Natural killer cell (primary cell): ENCODE measurements at regions of chr17 and their contacts with region 1.

Region 1: GRCh38 chr17:36148559-36149295 is 27.7 kb downstream of the TBC1D3B start:
- DNase-seq: peak; percentile 76 to 83
- ATAC-seq: peak; percentile 92 to 98 (median 94)
- H3K4me3 ChIP-seq: peak overlapping the region; percentile 37
- H3K4me3 Mint-ChIP-seq: peak overlapping the region; percentile 92
- H3K27ac ChIP-seq: peak overlapping the region; percentile 45
- H3K27ac Mint-ChIP-seq: peak overlapping the region; percentile 78 to 88
- H3K4me1 ChIP-seq: peaks cover 33% of the 10 kb centered on the region
- H3K4me1 Mint-ChIP-seq: peaks cover 64 to 69% of the 10 kb centered on the region in 2 donors
- H3K27me3 ChIP-seq: no peaks in the 10 kb centered on the region
- H3K27me3 Mint-ChIP-seq: peaks cover 0 to 3% of the 10 kb centered on the region in 2 donors
- CTCF ChIP-seq: peak; percentile 100

Region 2: DNA sequence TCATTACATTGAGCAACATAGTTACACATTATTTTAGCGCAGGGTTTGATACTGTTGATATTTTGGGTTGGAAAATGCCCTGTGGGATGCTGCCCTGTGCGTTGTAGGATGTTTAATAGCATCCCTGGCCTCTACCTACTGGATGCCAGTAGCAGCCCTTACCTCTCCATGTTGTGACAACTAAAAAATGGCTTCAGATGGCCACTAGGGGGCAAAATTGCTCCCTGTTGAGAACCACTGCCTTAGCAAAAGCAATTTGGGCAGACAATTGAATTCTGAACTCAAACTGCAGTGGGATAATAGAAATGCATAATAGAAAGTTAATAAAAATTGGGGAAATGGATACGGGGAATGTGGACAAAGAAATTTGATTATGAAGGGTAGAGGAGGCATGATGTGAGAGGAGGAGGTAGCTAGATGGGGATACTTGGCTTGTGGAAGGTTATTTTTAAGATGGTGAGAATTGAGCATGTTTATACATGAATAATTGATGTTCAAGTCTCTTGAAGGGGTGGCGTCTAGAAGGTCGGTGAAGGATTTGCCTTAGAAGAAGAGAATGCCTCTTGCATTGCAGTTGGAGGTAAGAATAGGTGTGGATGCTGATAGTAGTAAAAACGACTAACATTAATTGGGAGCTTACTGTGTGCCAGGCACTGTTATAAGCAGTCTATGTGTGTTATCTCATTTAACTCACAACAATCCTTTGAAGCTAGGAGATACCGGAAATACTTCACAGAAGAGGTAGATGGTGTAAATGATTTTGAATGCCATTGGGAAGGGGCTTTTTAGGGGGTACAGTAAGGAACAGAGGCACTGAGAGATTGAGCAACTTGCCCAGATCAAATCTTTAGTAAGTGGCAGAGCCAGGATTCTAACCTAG is 299.0 kb before region 1 on chr17:
- intact Hi-C with region 1: loop called (anchors 1 kb)
- DNase-seq: peak; percentile 44 to 86
- ATAC-seq: peak; percentile 81 to 96 (median 92)
- H3K4me3 ChIP-seq: no peak overlapping the region
- H3K4me3 Mint-ChIP-seq: peak overlapping the region; percentile 62
- H3K27ac ChIP-seq: peak overlapping the region; percentile 27
- H3K27ac Mint-ChIP-seq: peak overlapping the region; percentile 59 to 68
- H3K4me1 ChIP-seq: peaks cover 18% of the 10 kb centered on the region
- H3K4me1 Mint-ChIP-seq: peaks cover 27 to 41% of the 10 kb centered on the region in 2 donors
- H3K27me3 ChIP-seq: no peaks in the 10 kb centered on the region
- H3K27me3 Mint-ChIP-seq: no peaks in the 10 kb centered on the region
- CTCF ChIP-seq: peak; percentile 92

Region 3: GRCh38 chr17:35969558-35970380 is 179.0 kb before region 1 on chr17:
- intact Hi-C with region 1: loop called (anchors 1 kb)
- DNase-seq: peak; percentile 73 to 85
- ATAC-seq: peak; percentile 78 to 93 (median 88)
- H3K4me3 ChIP-seq: no peak overlapping the region
- H3K4me3 Mint-ChIP-seq: peak overlapping the region; percentile 28
- H3K27ac ChIP-seq: no peak overlapping the region
- H3K27ac Mint-ChIP-seq: peak overlapping the region in 1 of 2 donors; percentile 78
- H3K4me1 ChIP-seq: peaks cover 8% of the 10 kb centered on the region
- H3K4me1 Mint-ChIP-seq: peaks cover 10 to 22% of the 10 kb centered on the region in 2 donors
- H3K27me3 ChIP-seq: no peaks in the 10 kb centered on the region
- H3K27me3 Mint-ChIP-seq: no peaks in the 10 kb centered on the region
- CTCF ChIP-seq: peak; percentile 81

Region 4: GRCh38 chr17:35981908-35982330 is 166.8 kb before region 1 on chr17:
- intact Hi-C with region 1: no loop called
- DNase-seq: peak in 1 of 2 donors; percentile 30
- ATAC-seq: peak in 2 of 3 donors; percentile 38 to 62
- H3K4me3 ChIP-seq: no peak overlapping the region
- H3K4me3 Mint-ChIP-seq: no peak overlapping the region
- H3K27ac ChIP-seq: no peak overlapping the region
- H3K27ac Mint-ChIP-seq: peak overlapping the region in 1 of 2 donors; percentile 47
- H3K4me1 ChIP-seq: peaks cover 11% of the 10 kb centered on the region
- H3K4me1 Mint-ChIP-seq: peaks cover 25 to 61% of the 10 kb centered on the region in 2 donors
- H3K27me3 ChIP-seq: no peaks in the 10 kb centered on the region
- H3K27me3 Mint-ChIP-seq: no peaks in the 10 kb centered on the region
- CTCF ChIP-seq: peak; percentile 13

Region 5: DNA sequence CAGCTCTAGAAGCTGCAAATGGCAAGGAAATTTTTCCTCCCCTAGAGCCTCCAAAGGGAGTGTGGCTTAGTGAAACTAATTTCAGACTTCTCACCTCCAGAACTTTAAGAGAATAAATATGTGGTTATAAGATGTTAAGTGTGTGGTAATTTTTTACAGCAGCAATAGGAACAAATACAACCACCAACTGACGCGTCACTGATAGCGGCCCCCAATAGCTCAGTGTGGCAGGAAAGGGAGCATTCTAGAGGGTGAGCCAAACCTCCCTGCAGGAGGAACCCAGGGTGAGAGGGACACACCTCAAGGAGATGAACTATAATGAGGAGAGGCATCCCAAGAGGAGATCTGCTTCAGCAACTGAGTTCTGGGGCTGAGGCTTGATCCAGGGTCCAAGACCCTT is 41.1 kb before region 1 on chr17:
- intact Hi-C with region 1: loop called (anchors 5 kb)
- DNase-seq: peak in 1 of 2 donors; percentile 59
- ATAC-seq: peak; percentile 23 to 45 (median 31)
- H3K4me3 ChIP-seq: no peak overlapping the region
- H3K4me3 Mint-ChIP-seq: peak overlapping the region; percentile 74
- H3K27ac ChIP-seq: peak overlapping the region; percentile 82
- H3K27ac Mint-ChIP-seq: peak overlapping the region; percentile 94 to 96
- H3K4me1 ChIP-seq: peaks cover 61% of the 10 kb centered on the region
- H3K4me1 Mint-ChIP-seq: peaks cover 78 to 98% of the 10 kb centered on the region in 2 donors
- H3K27me3 ChIP-seq: no peaks in the 10 kb centered on the region
- H3K27me3 Mint-ChIP-seq: no peaks in the 10 kb centered on the region
- CTCF ChIP-seq: no peak

Region 6: GRCh38 chr17:36486204-36487194 is 337.8 kb after region 1 on chr17 and contains the start of gene ZNHIT3:
- intact Hi-C with region 1: loop called (anchors 5 kb)
- DNase-seq: peak; percentile 89 to 96
- ATAC-seq: peak; percentile 93 to 97 (median 95)
- H3K4me3 ChIP-seq: peak within 1 kb of the TSS; percentile 93
- H3K4me3 Mint-ChIP-seq: peak within 1 kb of the TSS; percentile 99
- H3K27ac ChIP-seq: peak within 1 kb of the TSS; percentile 57
- H3K27ac Mint-ChIP-seq: peak within 1 kb of the TSS; percentile 88 to 96
- H3K4me1 ChIP-seq: peaks cover 39% of the 10 kb centered on the region
- H3K4me1 Mint-ChIP-seq: peaks cover 43 to 58% of the 10 kb centered on the region in 2 donors
- H3K27me3 ChIP-seq: peaks cover 7% of the 10 kb centered on the region
- H3K27me3 Mint-ChIP-seq: peaks cover 10 to 14% of the 10 kb centered on the region in 2 donors
- CTCF ChIP-seq: no peak
- total RNA-seq, gene ZNHIT3: 27.1 to 41.3 (median 36.6) TPM